ENCODE measurements at regions of chr22 and their contacts with region 1.

Region 1: GRCh38 chr22:23385291-23386244 is 194.5 kb downstream of the IGLL1 start:
- DNase-seq: peak; percentile 61
- ATAC-seq: peak; percentile 95
- H3K4me3 ChIP-seq: no peak overlapping the region
- H3K27ac ChIP-seq: no peak overlapping the region; the same call in 1 of the 2 replicates
- H3K4me1 ChIP-seq: no peaks in the 10 kb centered on the region
- H3K27me3 ChIP-seq: no peaks in the 10 kb centered on the region
- CTCF ChIP-seq: peak; percentile 94 to 98 (median 96)
- POLR2A ChIP-seq: no peak
- RAD21 ChIP-seq: peak; percentile 93

Region 2: DNA sequence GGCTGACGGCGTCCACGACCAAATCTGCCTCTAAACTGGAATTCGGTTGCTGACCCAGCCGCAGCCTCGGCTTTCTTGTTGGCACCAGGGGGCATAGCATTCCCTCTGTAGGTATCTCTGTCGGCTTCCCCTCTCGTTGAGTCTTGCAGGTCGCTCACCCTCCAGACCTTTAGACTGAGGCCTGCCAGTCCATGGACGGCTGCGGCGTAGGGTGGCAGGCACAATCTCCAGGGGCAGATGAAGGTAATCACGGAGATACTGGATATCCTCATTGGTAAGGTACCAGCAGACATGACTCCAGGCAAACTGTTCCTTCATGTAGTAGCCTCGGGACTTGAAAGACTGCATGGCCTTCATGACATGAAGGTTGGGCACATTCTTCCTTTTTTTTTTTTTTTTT is 63.0 kb before region 1 on chr22:
- CTCF ChIA-PET with region 1: interaction called, 14 read pairs
- POLR2A ChIA-PET with region 1: no interaction called
- RAD21 ChIA-PET with region 1: no interaction called
- intact Hi-C with region 1: no loop called
- DNase-seq: no peak
- ATAC-seq: no peak
- H3K4me3 ChIP-seq: no peak overlapping the region
- H3K27ac ChIP-seq: no peak overlapping the region
- H3K4me1 ChIP-seq: no peaks in the 10 kb centered on the region
- H3K27me3 ChIP-seq: no peaks in the 10 kb centered on the region
- CTCF ChIP-seq: peak in 2 of 3 experiments; percentile 7 to 20; a peak in 2 of 6 replicates
- POLR2A ChIP-seq: no peak
- RAD21 ChIP-seq: 0 out of 2 replicates have a peak, but pooled peaks have one; percentile 10

Measured in HCT116 (cell line).